Activated B cell treated with CpG ODN at 0.5 μM for 24 hours (primary cell): ENCODE measurements at regions of chr6 and their contacts with region 1.

Region 1: GRCh38 chr6:158213925-158214674 is 46.0 kb downstream of the GTF2H5 start:
- DNase-seq: no peak
- ATAC-seq: peak; percentile 99
- H3K4me3 Mint-ChIP-seq: no peak overlapping the region
- H3K27ac Mint-ChIP-seq: no peak overlapping the region
- H3K4me1 Mint-ChIP-seq: peaks cover 3% of the 10 kb centered on the region
- H3K27me3 Mint-ChIP-seq: no peaks in the 10 kb centered on the region
- CTCF ChIP-seq: no peak

Region 2: GRCh38 chr6:158387036-158387435 is 172.9 kb after region 1 on chr6:
- CTCF ChIA-PET with region 1: interaction called, 13 read pairs
- POLR2A ChIA-PET with region 1: no interaction called
- intact Hi-C with region 1: no loop called
- DNase-seq: no peak
- ATAC-seq: no peak
- H3K4me3 Mint-ChIP-seq: no peak overlapping the region
- H3K27ac Mint-ChIP-seq: no peak overlapping the region
- H3K4me1 Mint-ChIP-seq: peaks cover 6% of the 10 kb centered on the region
- H3K27me3 Mint-ChIP-seq: no peaks in the 10 kb centered on the region
- CTCF ChIP-seq: no peak

Region 3: GRCh38 chr6:158605266-158605878 is 391.3 kb after region 1 on chr6:
- CTCF ChIA-PET with region 1: interaction called, 50 read pairs
- POLR2A ChIA-PET with region 1: no interaction called
- intact Hi-C with region 1: loop called (anchors 1 kb)
- DNase-seq: no peak
- ATAC-seq: peak; percentile 71
- H3K4me3 Mint-ChIP-seq: no peak overlapping the region
- H3K27ac Mint-ChIP-seq: no peak overlapping the region
- H3K4me1 Mint-ChIP-seq: no peaks in the 10 kb centered on the region
- H3K27me3 Mint-ChIP-seq: no peaks in the 10 kb centered on the region
- CTCF ChIP-seq: no peak

Region 4: DNA sequence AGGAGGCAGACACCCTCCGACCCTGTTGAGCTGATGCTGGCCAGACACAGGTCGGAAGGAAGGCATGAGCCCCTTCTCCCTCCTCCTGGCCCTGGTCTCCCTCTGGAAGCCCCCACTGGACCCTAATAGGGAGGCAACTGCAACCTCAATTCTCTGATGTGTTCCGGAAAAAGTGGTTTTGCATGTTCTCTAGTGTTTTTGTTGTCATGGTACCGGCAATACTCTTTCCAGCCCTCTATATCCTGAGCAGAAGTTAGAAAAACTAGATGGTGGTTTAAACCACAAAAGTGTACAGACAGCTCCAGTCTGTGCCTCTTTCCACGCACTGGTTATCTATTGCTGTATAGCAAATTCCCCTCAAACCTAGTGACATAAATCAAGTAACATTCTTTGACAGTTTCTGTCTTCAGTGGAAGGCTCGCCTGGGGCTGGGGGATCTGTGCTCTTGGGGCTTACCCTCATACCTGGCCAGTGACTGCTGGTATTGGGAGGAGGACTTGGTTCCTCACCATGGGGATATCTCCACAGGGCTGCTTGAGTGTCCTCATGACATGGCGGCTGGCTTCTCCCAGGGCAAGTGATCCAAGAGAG is 472.8 kb after region 1 on chr6:
- CTCF ChIA-PET with region 1: interaction called, 49 read pairs
- POLR2A ChIA-PET with region 1: interaction called, 6 read pairs
- intact Hi-C with region 1: loop called (anchors 1 kb)
- DNase-seq: no peak
- ATAC-seq: peak; percentile 84
- H3K4me3 Mint-ChIP-seq: no peak overlapping the region
- H3K27ac Mint-ChIP-seq: no peak overlapping the region
- H3K4me1 Mint-ChIP-seq: peaks cover 21% of the 10 kb centered on the region
- H3K27me3 Mint-ChIP-seq: no peaks in the 10 kb centered on the region
- CTCF ChIP-seq: no peak

Region 5: GRCh38 chr6:158769771-158770432 is 555.8 kb after region 1 on chr6:
- CTCF ChIA-PET with region 1: no interaction called
- POLR2A ChIA-PET with region 1: no interaction called
- intact Hi-C with region 1: no loop called
- DNase-seq: no peak
- ATAC-seq: no peak
- H3K4me3 Mint-ChIP-seq: no peak overlapping the region
- H3K27ac Mint-ChIP-seq: peak overlapping the region; percentile 46
- H3K4me1 Mint-ChIP-seq: no peaks in the 10 kb centered on the region
- H3K27me3 Mint-ChIP-seq: no peaks in the 10 kb centered on the region
- CTCF ChIP-seq: no peak

Region 6: GRCh38 chr6:158793432-158793831 is 579.3 kb after region 1 on chr6:
- CTCF ChIA-PET with region 1: no interaction called
- POLR2A ChIA-PET with region 1: no interaction called
- intact Hi-C with region 1: loop called (anchors 10 kb)
- DNase-seq: no peak
- ATAC-seq: peak; percentile 54
- H3K4me3 Mint-ChIP-seq: peak overlapping the region; percentile 44
- H3K27ac Mint-ChIP-seq: peak overlapping the region; percentile 70
- H3K4me1 Mint-ChIP-seq: peaks cover 95% of the 10 kb centered on the region
- H3K27me3 Mint-ChIP-seq: no peaks in the 10 kb centered on the region
- CTCF ChIP-seq: no peak

Region 7: GRCh38 chr6:159151266-159151855 is 937.3 kb after region 1 on chr6:
- CTCF ChIA-PET with region 1: no interaction called
- POLR2A ChIA-PET with region 1: no interaction called
- intact Hi-C with region 1: loop called (anchors 5 kb)
- DNase-seq: no peak
- ATAC-seq: peak; percentile 79
- H3K4me3 Mint-ChIP-seq: no peak overlapping the region
- H3K27ac Mint-ChIP-seq: no peak overlapping the region
- H3K4me1 Mint-ChIP-seq: peaks cover 4% of the 10 kb centered on the region
- H3K27me3 Mint-ChIP-seq: peaks cover 7% of the 10 kb centered on the region
- CTCF ChIP-seq: peak; percentile 47

Region 8: GRCh38 chr6:159174263-159174969 is 960.3 kb after region 1 on chr6:
- CTCF ChIA-PET with region 1: no interaction called
- POLR2A ChIA-PET with region 1: no interaction called
- intact Hi-C with region 1: no loop called
- DNase-seq: peak; percentile 52
- ATAC-seq: peak; percentile 81
- H3K4me3 Mint-ChIP-seq: peak overlapping the region; percentile 36
- H3K27ac Mint-ChIP-seq: no peak overlapping the region
- H3K4me1 Mint-ChIP-seq: peaks cover 18% of the 10 kb centered on the region
- H3K27me3 Mint-ChIP-seq: peaks cover 44% of the 10 kb centered on the region
- CTCF ChIP-seq: peak; percentile 70